ENCODE measurements at regions of chr3 and their contacts with region 1.

Region 1: DNA sequence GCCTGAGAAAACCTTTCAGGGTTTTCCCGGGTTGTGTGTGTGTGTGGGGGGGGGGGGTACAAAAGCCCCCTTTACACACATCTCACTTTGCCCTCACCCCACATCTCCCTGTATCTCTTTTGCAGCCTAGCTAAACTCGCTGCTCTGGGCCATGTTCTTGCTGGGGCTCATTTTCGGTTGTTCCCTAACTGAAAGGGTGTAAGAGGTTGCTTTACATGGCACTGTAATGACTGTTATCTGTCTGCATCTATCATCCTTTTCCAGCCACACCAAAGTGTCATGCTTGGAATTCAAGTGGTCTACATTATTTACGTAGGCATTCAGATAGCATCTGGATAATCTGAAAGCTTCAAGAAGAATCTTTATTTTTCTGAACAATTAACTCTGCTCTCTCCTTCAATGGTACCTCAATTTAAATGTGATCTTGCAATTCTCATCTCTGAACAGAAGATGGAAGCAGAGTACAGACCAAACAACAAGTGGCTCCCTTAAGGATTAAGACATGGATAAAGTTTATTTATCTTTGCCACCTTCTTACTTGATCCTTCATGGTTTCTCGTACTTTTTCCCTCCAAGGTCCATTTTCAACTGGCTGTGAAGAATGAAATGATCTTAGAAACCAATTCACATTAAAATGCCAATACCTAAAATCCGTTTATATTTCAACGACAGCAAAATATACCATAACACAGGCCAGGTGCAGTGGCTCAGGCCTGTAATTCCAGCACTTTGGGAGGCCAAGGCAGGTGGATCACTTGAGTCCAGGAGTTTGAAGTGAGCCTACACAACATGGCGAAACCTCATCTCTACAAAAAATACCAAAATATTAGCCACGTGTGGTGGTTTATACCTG is 34.9 kb downstream of the DCLK3 start:
- DNase-seq: no peak
- H3K4me3 ChIP-seq: no peak overlapping the region
- H3K27ac ChIP-seq: no peak overlapping the region
- H3K4me1 ChIP-seq: no peaks in the 10 kb centered on the region
- H3K27me3 ChIP-seq: no peaks in the 10 kb centered on the region
- CTCF ChIP-seq: peak; percentile 53 to 94 (median 65)
- POLR2A ChIP-seq: no peak

Region 2: GRCh38 chr3:36871379-36872126 is 142.1 kb after region 1 on chr3:
- intact Hi-C with region 1: loop called (anchors 5 kb)
- DNase-seq: peak in 1 of 2 donors; percentile 11
- H3K4me3 ChIP-seq: no peak overlapping the region
- H3K27ac ChIP-seq: no peak overlapping the region
- H3K4me1 ChIP-seq: no peaks in the 10 kb centered on the region
- H3K27me3 ChIP-seq: no peaks in the 10 kb centered on the region
- CTCF ChIP-seq: peak in 1 of 6 experiments; percentile 22
- POLR2A ChIP-seq: no peak

Region 3: GRCh38 chr3:36959821-36960220 is 230.4 kb after region 1 on chr3:
- intact Hi-C with region 1: loop called (anchors 5 kb)
- DNase-seq: peak; percentile 59 to 67
- H3K4me3 ChIP-seq: no peak overlapping the region
- H3K27ac ChIP-seq: peak overlapping the region; percentile 57 to 84 (median 75)
- H3K4me1 ChIP-seq: peaks cover 16 to 21% of the 10 kb centered on the region in 2 donors
- H3K27me3 ChIP-seq: no peaks in the 10 kb centered on the region
- CTCF ChIP-seq: no peak
- POLR2A ChIP-seq: no peak

Region 4: DNA sequence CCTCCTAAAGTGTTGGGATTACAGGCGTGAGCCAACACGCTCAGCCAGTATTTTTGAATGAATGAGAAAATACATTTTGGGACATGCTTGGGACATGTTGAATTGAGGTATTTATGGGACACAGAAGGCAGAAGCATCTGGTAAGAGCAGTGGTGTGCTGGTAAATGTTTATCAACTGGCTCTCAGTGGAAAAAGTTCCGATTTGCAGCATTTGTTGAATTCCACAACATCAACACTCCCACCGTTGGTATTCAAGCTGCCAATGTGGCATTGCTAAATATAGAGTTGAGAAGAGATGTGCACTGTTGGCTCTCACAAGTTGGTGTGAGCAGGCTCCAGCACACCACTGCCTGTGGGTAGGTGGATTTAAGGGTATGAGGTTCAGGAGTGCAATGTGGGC is 480.8 kb after region 1 on chr3:
- intact Hi-C with region 1: loop called (anchors 10 kb)
- DNase-seq: no peak
- H3K4me3 ChIP-seq: no peak overlapping the region
- H3K27ac ChIP-seq: no peak overlapping the region
- H3K4me1 ChIP-seq: peaks cover 3 to 10% of the 10 kb centered on the region in 2 donors
- H3K27me3 ChIP-seq: no peaks in the 10 kb centered on the region
- CTCF ChIP-seq: no peak
- POLR2A ChIP-seq: no peak

Measured in thyroid gland (tissue), 4 donors.